CD4-positive, alpha-beta memory T cell (primary cell): ENCODE measurements at regions of chr5 and their contacts with region 1.

Region 1: DNA sequence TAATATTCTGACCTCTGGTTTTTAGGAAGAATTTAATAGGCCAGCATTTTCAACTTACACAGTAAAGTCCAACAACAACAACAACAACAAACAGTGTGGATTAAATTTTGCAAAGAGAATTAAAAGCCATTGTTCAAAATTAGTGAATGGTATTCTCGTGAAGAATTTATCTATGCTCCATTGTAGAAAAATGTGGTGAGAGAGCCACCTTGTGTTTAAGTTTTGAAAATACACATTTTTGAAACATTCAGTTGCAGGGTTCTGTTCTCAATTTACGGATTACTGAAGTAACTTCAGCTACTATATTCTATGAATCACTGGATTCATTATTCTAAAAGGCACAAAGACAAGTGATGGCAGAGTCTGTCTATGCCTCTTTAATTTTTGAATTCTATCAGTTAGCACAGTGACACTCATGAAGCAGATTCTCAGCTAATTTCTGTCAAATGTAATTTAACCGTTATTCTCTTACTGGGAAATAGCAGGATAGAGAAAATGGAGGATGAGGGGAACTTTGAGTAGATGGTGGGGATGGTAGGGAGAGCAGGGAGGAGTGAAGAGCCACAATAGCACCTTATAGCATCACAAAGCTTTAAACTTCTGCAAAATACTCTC is 11.0 kb downstream of the CCDC152 start:
- DNase-seq: peak in 4 of 5 donors; percentile 29 to 40 (median 33)
- H3K4me3 ChIP-seq: no peak overlapping the region
- H3K4me3 Mint-ChIP-seq: no peak overlapping the region
- H3K27ac ChIP-seq: no peak overlapping the region
- H3K27ac Mint-ChIP-seq: no peak overlapping the region
- H3K4me1 ChIP-seq: no peaks in the 10 kb centered on the region
- H3K4me1 Mint-ChIP-seq: no peaks in the 10 kb centered on the region
- H3K27me3 ChIP-seq: no peaks in the 10 kb centered on the region
- H3K27me3 Mint-ChIP-seq: peaks cover 5 to 6% of the 10 kb centered on the region in 2 donors

Region 2: GRCh38 chr5:41270423-41271251 is 1497.0 kb before region 1 on chr5:
- CTCF ChIA-PET with region 1: no interaction called
- POLR2A ChIA-PET with region 1: no interaction called
- intact Hi-C with region 1: loop called (anchors 10 kb)
- DNase-seq: peak in 2 of 5 donors; percentile 1 to 2
- H3K4me3 ChIP-seq: no peak overlapping the region
- H3K4me3 Mint-ChIP-seq: no peak overlapping the region
- H3K27ac ChIP-seq: no peak overlapping the region
- H3K27ac Mint-ChIP-seq: no peak overlapping the region
- H3K4me1 ChIP-seq: no peaks in the 10 kb centered on the region
- H3K4me1 Mint-ChIP-seq: peaks cover 0 to 5% (median 1%) of the 10 kb centered on the region in 4 donors
- H3K27me3 ChIP-seq: no peaks in the 10 kb centered on the region
- H3K27me3 Mint-ChIP-seq: no peaks in the 10 kb centered on the region

Region 3: DNA sequence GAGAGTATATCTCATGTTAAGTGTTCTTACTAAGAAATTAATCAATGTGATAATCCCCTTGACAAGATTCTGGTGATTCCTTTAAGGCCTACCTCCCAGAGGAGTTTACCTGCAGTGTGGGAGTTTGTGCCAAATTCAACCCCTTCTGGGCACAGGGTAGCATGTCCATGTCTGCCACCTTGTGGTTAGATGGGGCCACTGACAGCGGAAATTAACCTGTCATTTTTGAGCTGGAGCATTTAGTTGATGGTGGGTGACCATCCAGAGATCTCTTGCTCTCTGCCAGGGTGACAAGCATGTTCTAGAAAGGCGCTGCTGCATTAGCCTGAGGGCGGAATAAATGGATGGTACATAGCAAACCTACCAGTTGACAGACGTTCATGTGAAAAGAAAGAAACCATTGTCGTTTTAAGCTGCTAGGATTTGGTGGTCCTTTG is 710.3 kb before region 1 on chr5:
- CTCF ChIA-PET with region 1: interaction called, 6 read pairs
- POLR2A ChIA-PET with region 1: no interaction called
- intact Hi-C with region 1: loop called (anchors 5 kb)
- DNase-seq: peak; percentile 51 to 57 (median 54)
- H3K4me3 ChIP-seq: no peak overlapping the region
- H3K4me3 Mint-ChIP-seq: no peak overlapping the region
- H3K27ac ChIP-seq: no peak overlapping the region
- H3K27ac Mint-ChIP-seq: no peak overlapping the region
- H3K4me1 ChIP-seq: no peaks in the 10 kb centered on the region
- H3K4me1 Mint-ChIP-seq: no peaks in the 10 kb centered on the region
- H3K27me3 ChIP-seq: no peaks in the 10 kb centered on the region
- H3K27me3 Mint-ChIP-seq: peaks cover 4 to 9% of the 10 kb centered on the region in 2 donors

Region 4: DNA sequence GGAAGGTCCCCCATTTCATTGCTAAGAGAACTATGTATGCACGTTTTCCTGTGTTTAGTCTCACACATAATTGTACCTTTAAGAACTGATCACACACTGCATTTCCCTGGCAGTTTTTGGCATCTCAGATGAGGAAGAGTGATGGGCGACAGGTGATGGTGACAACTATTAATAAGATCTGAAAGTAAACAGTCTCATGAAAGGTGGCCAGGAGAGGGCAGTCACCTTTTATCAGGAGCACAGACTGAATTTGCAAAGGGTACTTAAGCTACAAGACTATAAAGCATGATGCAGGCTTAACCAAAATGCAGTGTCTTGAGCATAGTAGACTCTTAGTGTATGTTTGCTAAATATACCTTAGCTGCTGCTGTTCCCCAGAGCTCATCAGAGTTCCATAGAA is 252.8 kb before region 1 on chr5:
- CTCF ChIA-PET with region 1: interaction called, 19 read pairs
- POLR2A ChIA-PET with region 1: interaction called, 3 read pairs
- intact Hi-C with region 1: loop called (anchors 1 kb)
- DNase-seq: peak in 2 of 5 donors; percentile 1 to 6
- H3K4me3 ChIP-seq: no peak overlapping the region
- H3K4me3 Mint-ChIP-seq: no peak overlapping the region
- H3K27ac ChIP-seq: no peak overlapping the region
- H3K27ac Mint-ChIP-seq: no peak overlapping the region
- H3K4me1 ChIP-seq: no peaks in the 10 kb centered on the region
- H3K4me1 Mint-ChIP-seq: no peaks in the 10 kb centered on the region
- H3K27me3 ChIP-seq: no peaks in the 10 kb centered on the region
- H3K27me3 Mint-ChIP-seq: peaks cover 0 to 1% of the 10 kb centered on the region in 2 donors

Region 5: DNA sequence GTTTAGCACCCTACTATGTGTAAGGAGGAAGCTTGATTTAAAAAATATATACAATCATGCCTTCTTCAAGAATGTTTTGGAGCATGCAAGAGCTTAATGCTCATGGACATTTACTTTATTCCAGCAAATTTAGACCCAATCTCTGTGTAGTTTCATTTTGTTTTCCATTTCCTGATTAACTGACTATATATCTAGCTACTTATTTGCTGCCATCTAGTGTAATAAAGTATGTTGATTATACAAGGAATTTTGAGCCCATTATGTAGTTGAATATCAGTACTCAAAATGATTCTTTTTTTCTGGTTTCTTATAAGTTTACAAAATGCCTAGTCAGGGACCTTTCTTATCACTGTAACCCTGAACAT is 111.0 kb before region 1 on chr5:
- CTCF ChIA-PET with region 1: interaction called, 3 read pairs
- POLR2A ChIA-PET with region 1: no interaction called
- intact Hi-C with region 1: loop called (anchors 10 kb)
- DNase-seq: no peak
- H3K4me3 ChIP-seq: no peak overlapping the region
- H3K4me3 Mint-ChIP-seq: peak overlapping the region in 4 of 8 donors; percentile 20 to 47 (median 36)
- H3K27ac ChIP-seq: no peak overlapping the region
- H3K27ac Mint-ChIP-seq: no peak overlapping the region
- H3K4me1 ChIP-seq: no peaks in the 10 kb centered on the region
- H3K4me1 Mint-ChIP-seq: no peaks in the 10 kb centered on the region
- H3K27me3 ChIP-seq: no peaks in the 10 kb centered on the region
- H3K27me3 Mint-ChIP-seq: peaks cover 1 to 6% of the 10 kb centered on the region in 2 donors

Region 6: GRCh38 chr5:42811591-42812446 is 44.2 kb after region 1 on chr5 and contains the start of gene SELENOP:
- CTCF ChIA-PET with region 1: no interaction called
- POLR2A ChIA-PET with region 1: no interaction called
- intact Hi-C with region 1: no loop called
- DNase-seq: no peak
- H3K4me3 ChIP-seq: no peak within 1 kb of the TSS
- H3K4me3 Mint-ChIP-seq: no peak within 1 kb of the TSS
- H3K27ac ChIP-seq: no peak within 1 kb of the TSS
- H3K27ac Mint-ChIP-seq: no peak within 1 kb of the TSS
- H3K4me1 ChIP-seq: no peaks in the 10 kb centered on the region
- H3K4me1 Mint-ChIP-seq: peaks cover 0 to 5% (median 3%) of the 10 kb centered on the region in 4 donors
- H3K27me3 ChIP-seq: no peaks in the 10 kb centered on the region
- H3K27me3 Mint-ChIP-seq: no peaks in the 10 kb centered on the region
- total RNA-seq, gene SELENOP: 0.86 to 1.4 TPM